Naive thymus-derived CD4-positive, alpha-beta T cell (primary cell): ENCODE measurements at regions of chr1 and their contacts with region 1.

Region 1: GRCh38 chr1:11907275-11908094 is 18.7 kb downstream of the KIAA2013 start:
- DNase-seq: peak; percentile 69 to 96 (median 94)
- ATAC-seq: peak; percentile 75
- H3K4me3 ChIP-seq: peak overlapping the region; percentile 92
- H3K4me3 Mint-ChIP-seq: peak overlapping the region; percentile 92 to 97 (median 94)
- H3K27ac ChIP-seq: peak overlapping the region; percentile 99
- H3K27ac Mint-ChIP-seq: peak overlapping the region; percentile 99 to 100 (median 100)
- H3K4me1 ChIP-seq: peaks cover 19% of the 10 kb centered on the region in 2 donors
- H3K4me1 Mint-ChIP-seq: peaks cover 9 to 45% (median 34%) of the 10 kb centered on the region in 7 donors
- H3K27me3 ChIP-seq: peaks cover 0 to 4% of the 10 kb centered on the region in 2 donors
- H3K27me3 Mint-ChIP-seq: peaks cover 0 to 41% (median under 1%) of the 10 kb centered on the region in 5 donors

Region 2: GRCh38 chr1:11012250-11013171 is 895.0 kb before region 1 on chr1 and contains the start of gene TARDBP:
- CTCF ChIA-PET with region 1: no interaction called
- POLR2A ChIA-PET with region 1: interaction called, 7 read pairs
- intact Hi-C with region 1: loop called in 1 of 2 experiments (anchors 2 kb)
- DNase-seq: peak; percentile 88 to 95 (median 93)
- ATAC-seq: peak; percentile 95
- H3K4me3 ChIP-seq: peak within 1 kb of the TSS; percentile 74
- H3K4me3 Mint-ChIP-seq: peak within 1 kb of the TSS; percentile 86 to 96 (median 93)
- H3K27ac ChIP-seq: peak within 1 kb of the TSS; percentile 94
- H3K27ac Mint-ChIP-seq: peak within 1 kb of the TSS; percentile 95 to 98 (median 98)
- H3K4me1 ChIP-seq: peaks cover 19 to 24% of the 10 kb centered on the region in 2 donors
- H3K4me1 Mint-ChIP-seq: peaks cover 15 to 36% (median 26%) of the 10 kb centered on the region in 7 donors
- H3K27me3 ChIP-seq: no peaks in the 10 kb centered on the region
- H3K27me3 Mint-ChIP-seq: no peaks in the 10 kb centered on the region
- total RNA-seq, gene TARDBP: 114 to 196 (median 174) TPM

Region 3: DNA sequence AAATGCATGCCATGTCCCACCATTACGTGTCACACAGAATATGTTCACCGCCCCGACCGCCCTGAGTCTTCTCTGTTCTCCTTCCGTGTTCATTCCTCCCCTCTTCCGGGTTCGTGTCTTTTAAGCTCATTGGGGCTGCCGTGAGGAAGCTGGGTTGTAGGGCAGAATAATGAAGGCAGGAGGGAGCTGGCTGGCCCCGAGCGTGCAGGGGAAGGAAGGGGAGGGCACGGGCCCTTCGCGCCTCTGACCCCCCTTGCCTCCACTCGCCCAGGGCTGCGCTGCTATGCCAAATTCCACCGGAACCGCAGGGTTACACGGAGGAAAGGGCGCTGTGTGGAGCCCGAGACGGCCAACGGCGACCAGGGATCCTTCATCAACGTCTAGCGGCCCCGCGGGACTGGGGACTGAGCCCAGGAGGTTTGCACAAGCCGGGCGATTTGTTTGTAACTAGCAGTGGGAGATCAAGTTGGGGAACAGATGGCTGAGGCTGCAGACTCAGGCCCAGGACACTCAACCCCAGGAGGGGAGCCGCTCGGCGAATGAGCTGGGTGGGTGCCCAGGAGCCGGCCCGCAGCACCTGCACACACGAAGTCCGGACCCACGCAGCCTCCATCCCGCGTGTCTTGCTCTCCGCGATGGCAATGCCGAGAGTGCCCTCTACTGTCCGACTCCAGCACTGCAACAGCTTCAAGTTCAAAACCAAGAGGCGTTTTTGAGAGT is 188.0 kb before region 1 on chr1:
- CTCF ChIA-PET with region 1: no interaction called
- POLR2A ChIA-PET with region 1: interaction called, 11 read pairs
- intact Hi-C with region 1: no loop called
- DNase-seq: peak; percentile 73 to 89 (median 82)
- ATAC-seq: peak; percentile 92
- H3K4me3 ChIP-seq: peak overlapping the region; percentile 66
- H3K4me3 Mint-ChIP-seq: peak overlapping the region; percentile 71 to 89 (median 86)
- H3K27ac ChIP-seq: peak overlapping the region; percentile 62
- H3K27ac Mint-ChIP-seq: peak overlapping the region; percentile 73 to 97 (median 93)
- H3K4me1 ChIP-seq: peaks cover 0 to 5% of the 10 kb centered on the region in 2 donors
- H3K4me1 Mint-ChIP-seq: peaks cover 8 to 21% (median 15%) of the 10 kb centered on the region in 7 donors
- H3K27me3 ChIP-seq: no peaks in the 10 kb centered on the region
- H3K27me3 Mint-ChIP-seq: peaks cover 0 to 10% (median 0%) of the 10 kb centered on the region in 5 donors

Region 4: GRCh38 chr1:11838349-11839272 is 68.9 kb before region 1 on chr1:
- CTCF ChIA-PET with region 1: interaction called, 4 read pairs
- POLR2A ChIA-PET with region 1: interaction called, 45 read pairs
- intact Hi-C with region 1: loop called (anchors 1 kb)
- DNase-seq: peak; percentile 59 to 79 (median 73)
- ATAC-seq: peak; percentile 93
- H3K4me3 ChIP-seq: no peak overlapping the region
- H3K4me3 Mint-ChIP-seq: no peak overlapping the region
- H3K27ac ChIP-seq: no peak overlapping the region
- H3K27ac Mint-ChIP-seq: peak overlapping the region in 1 of 9 donors; percentile 29
- H3K4me1 ChIP-seq: no peaks in the 10 kb centered on the region
- H3K4me1 Mint-ChIP-seq: peaks cover 0 to 8% (median 4%) of the 10 kb centered on the region in 7 donors
- H3K27me3 ChIP-seq: no peaks in the 10 kb centered on the region
- H3K27me3 Mint-ChIP-seq: no peaks in the 10 kb centered on the region

Region 5: DNA sequence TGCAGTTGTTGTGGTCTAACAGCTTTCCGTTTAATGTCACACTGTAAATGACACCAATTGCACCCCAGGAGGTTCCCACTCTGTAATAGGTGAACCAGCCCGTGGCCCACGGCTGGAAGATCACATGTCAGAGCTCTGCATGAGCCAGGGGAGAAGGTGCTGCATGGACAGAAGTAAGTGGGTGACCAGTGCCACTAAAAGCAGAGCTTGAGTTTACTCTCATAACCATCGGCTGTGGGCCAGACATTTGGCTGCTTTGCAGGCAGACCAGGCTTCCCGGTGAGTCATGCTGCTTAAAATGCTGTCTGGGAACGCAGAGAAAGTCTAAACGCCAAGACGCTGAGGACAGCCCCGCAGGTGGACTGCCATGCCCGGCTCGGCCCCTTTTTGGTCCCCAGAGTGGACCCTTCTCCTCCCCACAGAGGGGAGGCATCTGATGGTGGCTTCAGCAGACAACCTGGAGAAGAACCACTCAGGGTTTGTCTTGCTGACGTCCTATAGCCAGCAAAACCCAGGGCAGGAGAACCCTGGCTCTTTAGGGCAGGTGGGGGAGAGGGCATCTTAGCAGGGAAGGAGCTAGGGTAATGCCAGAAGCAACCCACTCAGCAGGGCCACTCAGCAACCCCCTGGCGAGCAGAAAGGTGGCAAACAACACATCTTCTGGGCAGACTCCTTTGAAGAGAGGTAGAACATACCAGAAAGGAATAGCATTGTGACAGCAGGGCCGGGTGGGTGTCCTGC is 11.5 kb after region 1 on chr1:
- CTCF ChIA-PET with region 1: interaction called, 3 read pairs
- POLR2A ChIA-PET with region 1: interaction called, 27 read pairs
- intact Hi-C with region 1: no loop called
- DNase-seq: no peak
- ATAC-seq: no peak
- H3K4me3 ChIP-seq: no peak overlapping the region
- H3K4me3 Mint-ChIP-seq: no peak overlapping the region
- H3K27ac ChIP-seq: no peak overlapping the region
- H3K27ac Mint-ChIP-seq: peak overlapping the region in 1 of 9 donors; percentile 27
- H3K4me1 ChIP-seq: peaks cover 5 to 16% of the 10 kb centered on the region in 2 donors
- H3K4me1 Mint-ChIP-seq: peaks cover 22 to 43% (median 28%) of the 10 kb centered on the region in 7 donors
- H3K27me3 ChIP-seq: no peaks in the 10 kb centered on the region
- H3K27me3 Mint-ChIP-seq: no peaks in the 10 kb centered on the region

Region 6: GRCh38 chr1:11979851-11980675 is 72.6 kb after region 1 on chr1 and contains the start of gene MFN2:
- CTCF ChIA-PET with region 1: no interaction called
- POLR2A ChIA-PET with region 1: interaction called, 83 read pairs
- intact Hi-C with region 1: loop called (anchors 1 kb)
- DNase-seq: peak; percentile 89 to 97 (median 94)
- ATAC-seq: peak; percentile 94
- H3K4me3 ChIP-seq: peak within 1 kb of the TSS; percentile 88
- H3K4me3 Mint-ChIP-seq: peak within 1 kb of the TSS; percentile 86 to 99 (median 92)
- H3K27ac ChIP-seq: peak within 1 kb of the TSS; percentile 98
- H3K27ac Mint-ChIP-seq: peak within 1 kb of the TSS; percentile 85 to 98 (median 94)
- H3K4me1 ChIP-seq: peaks cover 9 to 22% of the 10 kb centered on the region in 2 donors
- H3K4me1 Mint-ChIP-seq: peaks cover 33 to 46% (median 41%) of the 10 kb centered on the region in 7 donors
- H3K27me3 ChIP-seq: no peaks in the 10 kb centered on the region
- H3K27me3 Mint-ChIP-seq: no peaks in the 10 kb centered on the region
- total RNA-seq, gene MFN2: 40.2 to 58.6 (median 44.8) TPM

Region 7: GRCh38 chr1:12177999-12178441 is 270.5 kb after region 1 on chr1:
- CTCF ChIA-PET with region 1: no interaction called
- POLR2A ChIA-PET with region 1: interaction called, 4 read pairs
- intact Hi-C with region 1: loop called (anchors 2 kb)
- DNase-seq: peak; percentile 75 to 96 (median 85)
- ATAC-seq: peak; percentile 74
- H3K4me3 ChIP-seq: peak overlapping the region; percentile 38
- H3K4me3 Mint-ChIP-seq: peak overlapping the region; percentile 81 to 92 (median 86)
- H3K27ac ChIP-seq: peak overlapping the region; percentile 82
- H3K27ac Mint-ChIP-seq: peak overlapping the region; percentile 89 to 100 (median 97)
- H3K4me1 ChIP-seq: peaks cover 66 to 80% of the 10 kb centered on the region in 2 donors
- H3K4me1 Mint-ChIP-seq: peaks cover 51 to 91% (median 80%) of the 10 kb centered on the region in 7 donors
- H3K27me3 ChIP-seq: no peaks in the 10 kb centered on the region
- H3K27me3 Mint-ChIP-seq: no peaks in the 10 kb centered on the region